ENCODE measurements at regions of chr20 and their contacts with region 1.

Region 1: GRCh38 chr20:37498066-37498665 is 22.9 kb upstream of the NNAT start:
- DNase-seq: no peak
- ATAC-seq: no peak
- H3K4me3 ChIP-seq: no peak overlapping the region
- H3K27ac ChIP-seq: no peak overlapping the region
- H3K4me1 ChIP-seq: no peaks in the 10 kb centered on the region
- H3K27me3 ChIP-seq: no peaks in the 10 kb centered on the region
- CTCF ChIP-seq: no peak
- EP300 ChIP-seq: no peak
- POLR2A ChIP-seq: no peak
- RAD21 ChIP-seq: no peak

Region 2: DNA sequence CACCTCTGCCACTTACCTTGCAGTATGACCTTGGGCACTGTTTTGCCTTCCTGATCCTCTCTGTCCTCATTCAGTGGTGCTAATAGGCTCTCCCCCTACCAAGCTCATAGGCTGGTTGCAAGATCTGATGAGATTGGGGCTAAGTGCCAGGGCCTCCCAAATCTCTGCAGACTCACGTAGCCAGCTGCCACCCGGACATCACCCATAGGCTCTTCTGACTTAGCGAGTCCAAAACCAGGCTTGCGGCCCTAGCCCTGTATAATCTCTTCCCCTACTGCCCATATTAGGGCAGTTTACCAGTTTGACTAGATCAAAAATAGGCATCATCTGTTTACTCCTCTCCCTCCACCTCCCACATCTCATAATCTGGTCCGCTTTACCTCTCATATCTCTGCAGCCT is 350.5 kb after region 1 on chr20:
- CTCF ChIA-PET with region 1: no interaction called
- POLR2A ChIA-PET with region 1: interaction called, 10 read pairs
- RAD21 ChIA-PET with region 1: no interaction called
- SMC1A ChIA-PET with region 1: no interaction called
- in situ Hi-C with region 1: no loop called
- intact Hi-C with region 1: no loop called
- DNase-seq: no peak
- ATAC-seq: no peak
- H3K4me3 ChIP-seq: no peak overlapping the region
- H3K27ac ChIP-seq: no peak overlapping the region
- H3K4me1 ChIP-seq: peaks cover 25% of the 10 kb centered on the region
- H3K27me3 ChIP-seq: no peaks in the 10 kb centered on the region
- CTCF ChIP-seq: no peak
- EP300 ChIP-seq: no peak
- POLR2A ChIP-seq: no peak
- RAD21 ChIP-seq: no peak